ENCODE measurements at regions of chr1 and their contacts with region 1.

Region 1: GRCh38 chr1:208942394-208943130 is 641.0 kb upstream of the CAMK1G start:
- DNase-seq: no peak
- ATAC-seq: peak in 1 of 4 donors; percentile 46
- H3K4me3 ChIP-seq: no peak overlapping the region
- H3K27ac ChIP-seq: peak overlapping the region in 2 of 12 donors; percentile 10 to 14
- H3K4me1 ChIP-seq: peaks cover 0 to 24% (median 0%) of the 10 kb centered on the region in 12 donors
- H3K27me3 ChIP-seq: no peaks in the 10 kb centered on the region
- CTCF ChIP-seq: no peak
- POLR2A ChIP-seq: no peak

Region 2: DNA sequence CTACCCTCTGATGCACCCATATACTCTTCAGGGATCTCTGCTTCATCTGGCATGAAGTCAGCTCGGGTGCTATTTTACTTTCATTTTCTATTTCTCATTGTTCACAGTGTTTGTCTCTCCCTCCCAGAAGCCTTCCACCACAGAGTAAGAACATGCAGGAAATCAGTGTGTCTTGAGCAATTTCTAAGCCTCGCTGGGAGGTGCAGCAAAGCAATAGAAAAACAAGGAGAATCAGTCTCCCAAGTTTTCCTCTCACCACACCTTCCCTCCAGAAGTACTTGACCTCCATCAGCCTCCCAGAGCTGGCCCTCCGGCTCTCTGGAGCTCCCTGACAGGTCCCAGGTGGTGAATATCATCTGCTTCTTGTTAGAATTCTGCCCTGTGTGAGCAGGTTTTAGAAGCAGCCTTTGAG is 46.3 kb after region 1 on chr1:
- intact Hi-C with region 1: loop called in 2 of 10 experiments (anchors 5 kb)
- DNase-seq: peak in 2 of 5 donors; percentile 24 to 28
- ATAC-seq: peak; percentile 51 to 84 (median 60)
- H3K4me3 ChIP-seq: peak overlapping the region in 9 of 12 donors; percentile 26 to 50 (median 33)
- H3K27ac ChIP-seq: peak overlapping the region in 11 of 12 donors; percentile 20 to 75 (median 59)
- H3K4me1 ChIP-seq: peaks cover 0 to 24% (median 6%) of the 10 kb centered on the region in 12 donors
- H3K27me3 ChIP-seq: no peaks in the 10 kb centered on the region
- CTCF ChIP-seq: no peak
- POLR2A ChIP-seq: no peak

Measured in heart left ventricle (tissue), 16 donors.